CD8-positive, alpha-beta T cell (primary cell): ENCODE measurements at regions of chr17 and their contacts with region 1.

Region 1: DNA sequence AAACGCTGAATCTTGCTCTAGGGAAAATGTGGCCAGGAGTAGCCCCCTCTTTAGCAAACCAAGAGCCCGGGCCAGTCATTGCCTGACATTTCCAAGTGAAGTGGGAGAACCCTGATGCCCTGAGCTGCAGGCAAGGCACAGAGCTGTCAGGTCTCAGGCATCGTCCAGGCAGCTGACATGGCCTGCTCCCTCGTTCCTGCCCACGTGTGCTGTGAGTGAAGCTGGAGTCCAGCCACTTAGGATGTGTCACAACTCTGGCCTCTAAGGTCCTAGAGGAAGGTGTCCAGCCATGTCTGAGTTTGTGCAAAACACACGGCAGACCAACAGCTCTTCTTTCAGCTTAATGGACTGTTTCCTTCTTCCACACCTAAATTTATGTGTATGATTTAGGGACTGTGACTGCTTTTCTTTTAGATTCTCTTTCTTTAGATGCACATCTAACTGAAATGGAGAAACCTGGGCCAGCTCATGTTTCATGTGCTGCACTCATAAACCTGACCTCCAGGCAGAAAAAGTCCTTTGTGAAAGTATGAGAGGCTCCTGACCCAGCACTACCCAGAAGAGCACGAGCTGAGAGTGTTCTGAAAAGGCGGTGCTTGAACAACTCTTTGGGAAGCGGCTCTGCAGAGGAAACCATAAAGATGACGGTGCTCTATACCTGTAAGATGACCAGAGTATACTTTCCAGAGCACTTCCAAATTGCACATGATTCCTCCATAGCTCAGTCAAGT is 14.8 kb upstream of the LIMD2 start:
- DNase-seq: no peak
- ATAC-seq: no peak
- H3K4me3 ChIP-seq: no peak overlapping the region
- H3K4me3 Mint-ChIP-seq: no peak overlapping the region
- H3K27ac ChIP-seq: no peak overlapping the region
- H3K27ac Mint-ChIP-seq: no peak overlapping the region
- H3K4me1 ChIP-seq: peaks cover 12% of the 10 kb centered on the region
- H3K4me1 Mint-ChIP-seq: peaks cover 15% of the 10 kb centered on the region
- H3K27me3 ChIP-seq: no peaks in the 10 kb centered on the region
- H3K27me3 Mint-ChIP-seq: no peaks in the 10 kb centered on the region
- CTCF ChIP-seq: no peak

Region 2: GRCh38 chr17:63665527-63666214 is 49.0 kb before region 1 on chr17:
- CTCF ChIA-PET with region 1: interaction called, 5 read pairs
- POLR2A ChIA-PET with region 1: no interaction called
- intact Hi-C with region 1: loop called in 1 of 2 experiments (anchors 2 kb)
- DNase-seq: no peak
- ATAC-seq: no peak
- H3K4me3 ChIP-seq: no peak overlapping the region
- H3K4me3 Mint-ChIP-seq: no peak overlapping the region
- H3K27ac ChIP-seq: no peak overlapping the region
- H3K27ac Mint-ChIP-seq: no peak overlapping the region
- H3K4me1 ChIP-seq: no peaks in the 10 kb centered on the region
- H3K4me1 Mint-ChIP-seq: peaks cover 13% of the 10 kb centered on the region
- H3K27me3 ChIP-seq: no peaks in the 10 kb centered on the region
- H3K27me3 Mint-ChIP-seq: no peaks in the 10 kb centered on the region
- CTCF ChIP-seq: no peak

Region 3: GRCh38 chr17:63675607-63676413 is 38.9 kb before region 1 on chr17:
- CTCF ChIA-PET with region 1: interaction called, 18 read pairs
- POLR2A ChIA-PET with region 1: interaction called, 3 read pairs
- intact Hi-C with region 1: no loop called
- DNase-seq: no peak
- ATAC-seq: no peak
- H3K4me3 ChIP-seq: no peak overlapping the region
- H3K4me3 Mint-ChIP-seq: no peak overlapping the region
- H3K27ac ChIP-seq: no peak overlapping the region
- H3K27ac Mint-ChIP-seq: peak overlapping the region; percentile 32
- H3K4me1 ChIP-seq: no peaks in the 10 kb centered on the region
- H3K4me1 Mint-ChIP-seq: peaks cover 19% of the 10 kb centered on the region
- H3K27me3 ChIP-seq: no peaks in the 10 kb centered on the region
- H3K27me3 Mint-ChIP-seq: no peaks in the 10 kb centered on the region
- CTCF ChIP-seq: no peak